HepG2 (cell line): ENCODE measurements at regions of chr11 and their contacts with region 1.

Region 1: GRCh38 chr11:59135648-59136461 is 6.8 kb upstream of the FAM111A start:
- DNase-seq: peak; percentile 70
- ATAC-seq: peak; percentile 100
- H3K4me3 ChIP-seq: peak overlapping the region in 2 of 3 experiments; percentile 36 to 60; a peak in 2 of 6 replicates
- H3K27ac ChIP-seq: peak overlapping the region; percentile 57
- H3K4me1 ChIP-seq: peaks cover 12% of the 10 kb centered on the region
- H3K27me3 ChIP-seq: no peaks in the 10 kb centered on the region
- CTCF ChIP-seq: peak; percentile 99
- EP300 ChIP-seq: no peak
- POLR2A ChIP-seq: no peak
- RAD21 ChIP-seq: peak; percentile 93

Region 2: DNA sequence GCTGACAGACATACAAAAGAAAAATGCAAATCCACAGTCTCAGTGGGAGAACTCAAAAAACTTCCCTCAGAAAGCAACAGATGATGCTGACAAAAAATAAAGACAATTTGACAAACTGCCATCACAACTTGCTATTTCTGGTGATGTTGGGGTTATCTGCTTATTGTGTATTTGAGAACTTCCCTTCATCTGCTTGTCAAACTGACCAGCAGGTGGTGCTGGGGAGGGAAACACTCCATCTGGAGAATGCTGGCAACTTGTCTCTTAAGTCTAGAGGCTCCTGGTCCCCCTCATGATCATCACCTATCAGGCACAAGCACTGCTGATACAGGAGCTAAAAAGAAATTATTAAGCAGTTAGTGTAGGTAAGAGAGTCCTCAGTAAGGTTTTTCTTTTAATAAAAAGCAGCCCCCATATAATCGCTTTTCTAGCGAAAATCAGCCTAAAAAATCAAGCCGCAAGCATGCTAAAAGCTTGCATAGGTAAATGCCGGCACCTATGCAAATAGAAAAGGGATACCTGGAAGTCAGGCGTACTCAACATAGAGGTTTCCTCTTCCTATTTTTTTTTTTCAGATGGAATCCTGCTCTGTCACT is 38.6 kb before region 1 on chr11:
- CTCF ChIA-PET with region 1: interaction called, 42 read pairs
- POLR2A ChIA-PET with region 1: no interaction called
- in situ Hi-C with region 1: loop called (anchors 5 kb)
- intact Hi-C with region 1: loop called (anchors 1 kb)
- DNase-seq: peak; percentile 60
- ATAC-seq: peak; percentile 77
- H3K4me3 ChIP-seq: no peak overlapping the region
- H3K27ac ChIP-seq: no peak overlapping the region
- H3K4me1 ChIP-seq: no peaks in the 10 kb centered on the region
- H3K27me3 ChIP-seq: no peaks in the 10 kb centered on the region
- CTCF ChIP-seq: peak; percentile 73
- EP300 ChIP-seq: no peak
- POLR2A ChIP-seq: no peak
- RAD21 ChIP-seq: no peak

Region 3: GRCh38 chr11:59106363-59107336 is 29.2 kb before region 1 on chr11 and contains the start of gene FAM111B:
- CTCF ChIA-PET with region 1: interaction called, 4 read pairs
- POLR2A ChIA-PET with region 1: interaction called, 14 read pairs
- in situ Hi-C with region 1: no loop called
- intact Hi-C with region 1: no loop called
- DNase-seq: peak; percentile 94
- ATAC-seq: peak; percentile 98
- H3K4me3 ChIP-seq: peak within 1 kb of the TSS; percentile 58 to 77 (median 59)
- H3K27ac ChIP-seq: peak within 1 kb of the TSS; percentile 60
- H3K4me1 ChIP-seq: peaks cover 33% of the 10 kb centered on the region
- H3K27me3 ChIP-seq: no peaks in the 10 kb centered on the region
- CTCF ChIP-seq: 0 out of 2 replicates have a peak, but pooled peaks have one; percentile 9
- EP300 ChIP-seq: no peak
- POLR2A ChIP-seq: peak; percentile 54 to 61; a peak in 3 of 4 replicates
- RAD21 ChIP-seq: no peak
- total RNA-seq, gene FAM111B: 28.2 and 44.5 TPM in 2 replicates

Region 4: DNA sequence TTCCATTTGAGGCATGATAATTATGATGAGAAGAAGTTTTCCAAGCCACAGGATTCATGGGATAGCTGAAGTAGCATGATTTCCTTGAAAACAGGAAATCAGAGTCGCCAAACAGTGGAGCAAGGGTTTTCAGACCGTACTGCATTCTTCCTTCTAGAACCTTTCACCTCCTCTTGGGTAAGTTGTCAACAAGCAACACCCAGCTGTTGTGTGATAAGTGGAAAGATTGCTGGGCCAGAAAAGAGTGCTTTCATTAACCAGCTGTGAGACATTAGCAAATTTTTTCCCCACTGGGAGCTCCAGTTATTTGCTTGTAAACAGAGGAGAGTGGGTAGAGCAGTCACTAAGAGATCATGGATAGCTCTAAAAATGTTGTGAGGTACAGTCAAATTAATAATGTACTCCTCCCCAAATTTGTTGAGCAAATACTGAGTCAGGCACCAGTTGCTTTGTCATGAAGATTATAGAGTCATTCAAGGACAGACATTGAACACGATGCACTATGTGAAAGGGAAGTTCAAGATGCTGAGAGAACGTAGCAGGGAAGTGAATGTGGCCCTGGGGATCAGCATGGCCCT is 88.6 kb after region 1 on chr11:
- CTCF ChIA-PET with region 1: no interaction called
- POLR2A ChIA-PET with region 1: no interaction called
- in situ Hi-C with region 1: no loop called
- intact Hi-C with region 1: no loop called
- DNase-seq: no peak
- ATAC-seq: no peak
- H3K4me3 ChIP-seq: no peak overlapping the region
- H3K27ac ChIP-seq: no peak overlapping the region
- H3K4me1 ChIP-seq: no peaks in the 10 kb centered on the region
- H3K27me3 ChIP-seq: peaks cover 0 to 2% of the 10 kb centered on the region in 2 experiments; a peak in 1 of 5 replicates
- CTCF ChIP-seq: no peak
- EP300 ChIP-seq: no peak
- POLR2A ChIP-seq: no peak
- RAD21 ChIP-seq: no peak

Region 5: DNA sequence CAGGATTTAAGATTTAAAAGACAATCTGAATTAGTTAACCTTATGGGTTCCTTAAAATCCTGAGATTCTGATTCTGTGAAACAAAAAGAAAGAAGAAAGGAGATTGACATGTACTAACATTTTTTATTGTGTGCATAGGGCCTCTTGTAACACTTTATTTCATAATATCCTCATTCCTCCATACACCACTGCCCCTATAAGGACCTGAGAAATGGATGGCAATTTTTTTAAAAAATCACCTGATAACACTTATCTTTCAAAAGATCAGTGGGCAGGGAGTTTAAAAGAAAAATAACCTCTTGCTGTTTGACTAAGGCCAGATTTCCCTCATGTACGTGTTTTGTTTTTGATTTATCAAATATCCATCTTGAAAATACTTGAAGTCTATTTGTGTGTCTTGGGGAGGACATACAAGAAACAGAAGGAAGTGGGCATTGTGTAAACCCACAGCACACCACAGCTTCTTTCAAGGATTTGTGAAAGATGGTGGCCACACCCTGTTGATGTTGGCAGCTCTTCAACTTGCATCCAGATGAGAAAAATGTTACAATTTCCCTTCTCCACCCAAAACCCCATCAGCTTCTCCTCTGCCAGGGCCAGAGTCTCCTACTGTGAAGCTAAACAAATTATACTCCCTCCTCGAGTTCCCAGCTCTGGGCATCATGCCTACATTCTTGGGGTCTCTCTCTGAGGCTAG is 111.8 kb after region 1 on chr11:
- CTCF ChIA-PET with region 1: no interaction called
- POLR2A ChIA-PET with region 1: no interaction called
- in situ Hi-C with region 1: no loop called
- intact Hi-C with region 1: no loop called
- DNase-seq: no peak
- ATAC-seq: no peak
- H3K4me3 ChIP-seq: no peak overlapping the region
- H3K27ac ChIP-seq: no peak overlapping the region
- H3K4me1 ChIP-seq: no peaks in the 10 kb centered on the region
- H3K27me3 ChIP-seq: no peaks in the 10 kb centered on the region; a peak in 1 of 5 replicates
- CTCF ChIP-seq: no peak
- EP300 ChIP-seq: no peak
- POLR2A ChIP-seq: no peak
- RAD21 ChIP-seq: no peak